ENCODE measurements at regions of chrX and their contacts with region 1.

Region 1: DNA sequence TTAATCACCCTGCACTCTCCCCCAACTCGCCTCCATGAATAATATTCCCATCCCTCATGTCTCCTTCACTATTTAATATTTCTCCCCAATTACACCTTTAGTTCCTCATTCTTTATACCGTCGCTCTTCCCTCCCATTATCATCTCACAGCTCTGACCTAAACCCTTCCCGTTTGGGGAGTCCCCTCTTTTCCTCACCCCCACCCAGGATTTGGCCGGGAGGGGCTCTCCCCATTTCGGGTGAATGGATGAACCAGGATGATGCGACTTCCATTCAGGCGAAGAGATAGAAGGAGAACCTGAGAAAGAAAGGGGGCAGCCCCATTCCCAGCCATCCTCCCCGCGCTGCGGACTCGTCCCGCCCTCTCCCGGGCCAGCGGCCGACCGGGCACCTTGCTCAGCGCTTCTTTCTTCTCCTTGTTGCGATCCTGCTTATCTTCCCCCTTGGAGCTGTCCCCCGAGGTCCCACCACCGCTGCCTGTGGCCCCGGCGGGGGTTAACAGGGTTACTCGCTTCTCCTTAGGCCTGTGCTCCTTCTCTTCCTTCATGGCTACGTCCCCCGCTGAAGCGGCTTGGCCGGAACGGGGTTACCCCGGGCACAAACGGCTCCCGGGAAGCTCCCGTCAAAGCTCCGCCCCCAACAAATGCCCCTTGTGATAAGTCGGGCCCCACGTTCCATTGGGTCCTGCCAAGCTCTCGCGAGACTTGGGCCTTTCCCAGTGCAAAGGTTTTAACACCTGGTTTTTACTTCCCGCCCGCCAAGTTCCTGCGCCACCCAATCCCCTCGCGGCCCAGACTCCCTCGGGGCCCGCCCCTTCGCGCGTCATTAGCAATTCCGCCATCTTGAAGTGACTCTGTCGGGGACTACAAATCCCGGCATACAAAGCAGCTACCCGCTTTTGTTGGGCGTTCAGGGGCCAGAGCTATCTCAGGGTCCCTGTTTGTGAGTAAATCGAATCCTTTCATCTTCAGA is at the start of gene UPF3B:
- DNase-seq: peak; percentile 97 to 98
- ATAC-seq: peak; percentile 94
- H3K4me3 ChIP-seq: peak within 1 kb of the TSS; percentile 38 to 57
- H3K27ac ChIP-seq: peak within 1 kb of the TSS in 1 of 2 donors; percentile 71
- H3K4me1 ChIP-seq: no peaks in the 10 kb centered on the region
- H3K27me3 ChIP-seq: no peaks in the 10 kb centered on the region
- total RNA-seq, gene UPF3B: 6.7 to 9.5 TPM

Region 2: DNA sequence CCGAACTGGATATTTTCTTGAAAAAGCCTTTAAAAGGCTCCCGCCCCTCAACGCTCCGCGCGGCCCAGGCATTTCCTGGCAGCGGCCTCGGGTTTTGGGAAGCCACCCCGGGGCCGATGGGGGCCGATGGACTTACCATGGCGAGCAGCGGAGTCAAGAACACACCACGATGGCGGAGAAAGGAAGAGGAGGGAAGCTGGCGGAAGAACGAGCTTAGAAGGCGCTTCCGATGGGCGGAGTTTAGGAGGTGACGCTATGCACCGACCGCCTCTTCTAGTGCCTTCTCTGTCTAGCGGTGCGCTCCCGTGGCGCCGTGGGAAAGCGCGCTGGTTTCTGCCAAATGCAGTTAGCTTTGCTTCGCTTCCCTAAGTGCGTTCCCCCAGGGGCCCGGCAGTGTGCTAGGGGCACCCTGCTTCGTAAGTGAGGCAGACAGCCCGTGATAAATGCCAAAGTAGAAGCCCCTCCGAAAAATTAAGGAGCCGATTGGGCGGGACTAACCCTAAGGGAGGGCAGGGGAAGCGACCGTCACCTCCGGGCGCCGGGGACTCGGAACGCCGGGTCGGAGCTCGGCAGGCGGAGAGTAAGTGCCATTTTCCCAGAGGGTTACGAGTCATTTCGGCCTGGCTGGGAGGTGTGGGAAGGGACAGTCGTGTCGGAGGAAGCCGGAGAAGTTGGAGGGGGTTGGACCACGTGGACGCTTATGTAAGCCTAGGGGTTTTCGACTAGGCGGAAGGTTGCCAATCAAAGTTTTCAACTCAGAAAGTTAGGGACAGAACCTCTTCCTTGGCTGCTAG is 61.0 kb before region 1 on chrX and contains the start of gene RPL39:
- intact Hi-C with region 1: loop called in 1 of 2 experiments (anchors 5 kb)
- DNase-seq: peak; percentile 88 to 92
- ATAC-seq: peak; percentile 97
- H3K4me3 ChIP-seq: peak within 1 kb of the TSS; percentile 44 to 45
- H3K27ac ChIP-seq: peak within 1 kb of the TSS; percentile 58 to 81
- H3K4me1 ChIP-seq: no peaks in the 10 kb centered on the region
- H3K27me3 ChIP-seq: no peaks in the 10 kb centered on the region
- total RNA-seq, gene RPL39: 1,166 to 1,184 TPM

Measured in aorta (tissue), 5 donors.